ENCODE measurements at regions of chr3 and their contacts with region 1.

Region 1: DNA sequence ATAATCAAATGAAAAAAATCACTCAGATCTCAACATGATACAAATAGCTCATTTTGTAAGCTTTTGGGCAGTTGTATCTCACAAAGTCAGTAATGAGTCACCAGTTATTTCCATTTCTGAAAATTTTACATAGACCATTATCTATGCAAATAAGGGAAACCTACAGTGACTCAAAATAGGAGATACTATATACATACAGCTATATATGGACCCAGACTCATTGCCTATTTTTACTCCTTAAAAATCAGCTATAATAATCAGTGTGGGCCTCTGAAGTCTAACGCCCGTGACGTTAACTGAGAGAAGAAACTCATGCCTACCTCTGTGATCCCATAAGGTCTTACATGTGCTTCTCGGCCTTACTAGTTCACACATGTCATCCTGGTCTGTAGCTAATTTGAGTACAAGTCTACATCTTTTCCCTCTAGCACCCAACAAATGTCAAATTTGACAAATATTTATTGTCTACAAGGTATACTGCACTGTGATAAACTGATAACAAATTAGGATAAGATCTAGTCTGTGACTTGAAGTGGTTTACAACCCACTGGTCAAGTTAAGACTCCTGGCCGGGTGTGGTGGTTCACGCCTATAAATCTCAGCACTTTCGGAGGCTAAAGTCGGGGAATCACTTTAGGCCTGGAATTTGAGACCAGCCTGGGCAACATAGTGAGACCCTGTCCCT is 31.5 kb downstream of the LRIG1 start:
- DNase-seq: no peak
- ATAC-seq: no peak
- H3K4me3 ChIP-seq: no peak overlapping the region
- H3K27ac ChIP-seq: no peak overlapping the region
- H3K4me1 ChIP-seq: peaks cover 85% of the 10 kb centered on the region
- H3K27me3 ChIP-seq: no peaks in the 10 kb centered on the region
- CTCF ChIP-seq: no peak
- EP300 ChIP-seq: no peak
- POLR2A ChIP-seq: no peak
- RAD21 ChIP-seq: no peak

Region 2: GRCh38 chr3:66442254-66443117 is 26.9 kb before region 1 on chr3:
- CTCF ChIA-PET with region 1: no interaction called
- POLR2A ChIA-PET with region 1: interaction called, 13 read pairs
- in situ Hi-C with region 1: no loop called
- intact Hi-C with region 1: no loop called
- DNase-seq: peak; percentile 75
- ATAC-seq: peak; percentile 89
- H3K4me3 ChIP-seq: peak overlapping the region in 1 of 3 experiments; percentile 7; a peak in 1 of 6 replicates
- H3K27ac ChIP-seq: peak overlapping the region; percentile 58
- H3K4me1 ChIP-seq: peaks cover 34% of the 10 kb centered on the region
- H3K27me3 ChIP-seq: no peaks in the 10 kb centered on the region
- CTCF ChIP-seq: no peak
- EP300 ChIP-seq: 0 out of 4 replicates have a peak, but pooled peaks of 1 of the 2 experiments have one; percentile 21
- POLR2A ChIP-seq: no peak
- RAD21 ChIP-seq: no peak

Measured in HepG2 (cell line).